ENCODE measurements at regions of chr13 and their contacts with region 1.

Region 1: DNA sequence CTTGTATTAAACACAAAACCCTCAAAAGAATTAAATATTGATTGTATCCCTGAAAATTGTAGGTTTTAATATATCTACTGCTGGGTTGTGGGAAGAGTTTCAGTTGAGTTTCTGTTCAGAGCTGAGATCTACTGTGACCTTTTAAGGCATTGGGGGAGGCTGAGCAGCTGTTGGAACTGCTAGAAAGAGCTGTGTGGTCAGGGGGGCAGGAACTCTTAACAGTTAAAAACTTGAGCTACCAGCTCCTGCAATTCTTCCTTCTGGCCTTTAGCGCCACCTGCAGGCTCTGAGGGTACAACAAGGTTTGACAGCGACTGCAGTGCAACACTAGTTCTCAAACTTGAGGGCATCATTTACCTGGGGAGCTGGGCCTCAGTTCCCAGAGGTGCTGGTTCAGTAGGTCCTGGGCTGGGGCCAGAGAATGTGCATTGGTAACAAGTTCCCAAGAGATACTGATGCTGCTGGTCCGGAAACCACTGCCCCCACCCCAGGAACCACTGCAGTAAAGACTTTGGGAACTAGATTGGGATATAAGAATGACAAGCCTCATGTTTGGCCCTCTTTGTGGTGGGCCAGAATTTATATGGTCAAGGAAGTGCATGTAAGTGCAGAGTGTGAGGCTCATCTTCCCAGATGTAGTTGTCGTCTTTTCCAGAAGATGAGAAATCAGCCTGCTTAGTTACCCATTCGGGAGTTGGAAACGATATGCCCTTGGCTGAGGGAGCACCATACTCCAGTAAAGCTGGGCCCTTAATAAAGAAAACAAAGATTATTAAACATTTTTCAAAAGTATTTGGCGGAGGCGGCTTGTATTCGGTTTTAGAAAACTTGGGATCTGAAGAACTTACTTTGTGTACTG is 2.6 kb downstream of the RNASEH2B start:
- DNase-seq: peak; percentile 92
- ATAC-seq: peak; percentile 56
- H3K4me3 ChIP-seq: peak overlapping the region; percentile 71 to 94 (median 87)
- H3K4me3 Mint-ChIP-seq: peak overlapping the region; percentile 95
- H3K27ac ChIP-seq: peak overlapping the region; percentile 95 to 98
- H3K27ac Mint-ChIP-seq: peak overlapping the region; percentile 97
- H3K4me1 ChIP-seq: peaks cover 56 to 59% of the 10 kb centered on the region in 2 donors
- H3K4me1 Mint-ChIP-seq: peaks cover 70% of the 10 kb centered on the region
- H3K27me3 ChIP-seq: no peaks in the 10 kb centered on the region
- H3K27me3 Mint-ChIP-seq: no peaks in the 10 kb centered on the region
- CTCF ChIP-seq: peak; percentile 89

Region 2: GRCh38 chr13:49840266-49840665 is 1071.9 kb before region 1 on chr13:
- CTCF ChIA-PET with region 1: no interaction called
- POLR2A ChIA-PET with region 1: no interaction called
- intact Hi-C with region 1: loop called (anchors 5 kb)
- DNase-seq: no peak
- ATAC-seq: no peak
- H3K4me3 ChIP-seq: no peak overlapping the region
- H3K4me3 Mint-ChIP-seq: no peak overlapping the region
- H3K27ac ChIP-seq: no peak overlapping the region
- H3K27ac Mint-ChIP-seq: no peak overlapping the region
- H3K4me1 ChIP-seq: no peaks in the 10 kb centered on the region
- H3K4me1 Mint-ChIP-seq: no peaks in the 10 kb centered on the region
- H3K27me3 ChIP-seq: no peaks in the 10 kb centered on the region
- H3K27me3 Mint-ChIP-seq: no peaks in the 10 kb centered on the region
- CTCF ChIP-seq: no peak

Region 3: DNA sequence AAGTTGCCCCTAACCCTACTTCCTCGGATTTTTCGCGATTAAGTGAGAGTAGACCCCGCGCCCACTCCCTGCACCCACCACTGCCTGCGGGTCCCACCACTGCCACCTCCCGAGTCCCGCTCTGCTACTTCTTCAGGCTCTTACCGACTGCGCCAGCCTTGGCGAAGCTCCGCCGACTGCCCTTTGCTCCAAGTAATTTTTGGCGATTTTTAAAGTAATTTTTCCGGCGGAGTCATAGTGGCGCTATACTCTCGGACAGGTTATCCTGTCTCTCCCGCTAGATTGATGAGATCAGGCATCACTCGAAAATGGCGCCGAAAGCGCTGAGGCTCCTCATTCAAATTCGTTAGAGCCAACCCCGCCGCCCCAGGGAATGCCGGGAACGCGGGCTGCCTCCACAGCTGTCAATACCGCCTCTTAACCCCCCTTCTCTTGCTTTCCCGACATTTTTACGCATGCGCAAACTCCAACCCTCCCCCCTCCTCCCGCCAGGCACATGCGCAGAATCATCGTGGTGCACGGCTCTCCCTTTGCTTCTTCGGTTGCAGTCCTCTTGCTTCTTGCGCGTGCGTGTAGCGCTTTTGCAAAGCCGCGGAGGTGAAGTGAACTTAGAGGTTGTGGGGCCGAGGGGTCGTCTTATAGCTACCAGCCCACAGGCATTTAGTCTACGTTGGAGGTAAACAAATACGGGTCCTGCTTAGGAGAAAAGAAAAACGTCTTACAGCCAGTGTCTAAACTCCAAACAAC is 830.3 kb before region 1 on chr13:
- CTCF ChIA-PET with region 1: interaction called, 32 read pairs
- POLR2A ChIA-PET with region 1: interaction called, 8 read pairs
- intact Hi-C with region 1: loop called (anchors 1 kb)
- DNase-seq: peak; percentile 99
- ATAC-seq: peak; percentile 77
- H3K4me3 ChIP-seq: peak overlapping the region; percentile 81 to 99 (median 91)
- H3K4me3 Mint-ChIP-seq: peak overlapping the region; percentile 94
- H3K27ac ChIP-seq: peak overlapping the region; percentile 82 to 85
- H3K27ac Mint-ChIP-seq: peak overlapping the region; percentile 94
- H3K4me1 ChIP-seq: peaks cover 29 to 48% of the 10 kb centered on the region in 2 donors
- H3K4me1 Mint-ChIP-seq: peaks cover 57% of the 10 kb centered on the region
- H3K27me3 ChIP-seq: no peaks in the 10 kb centered on the region
- H3K27me3 Mint-ChIP-seq: no peaks in the 10 kb centered on the region
- CTCF ChIP-seq: no peak

Region 4: DNA sequence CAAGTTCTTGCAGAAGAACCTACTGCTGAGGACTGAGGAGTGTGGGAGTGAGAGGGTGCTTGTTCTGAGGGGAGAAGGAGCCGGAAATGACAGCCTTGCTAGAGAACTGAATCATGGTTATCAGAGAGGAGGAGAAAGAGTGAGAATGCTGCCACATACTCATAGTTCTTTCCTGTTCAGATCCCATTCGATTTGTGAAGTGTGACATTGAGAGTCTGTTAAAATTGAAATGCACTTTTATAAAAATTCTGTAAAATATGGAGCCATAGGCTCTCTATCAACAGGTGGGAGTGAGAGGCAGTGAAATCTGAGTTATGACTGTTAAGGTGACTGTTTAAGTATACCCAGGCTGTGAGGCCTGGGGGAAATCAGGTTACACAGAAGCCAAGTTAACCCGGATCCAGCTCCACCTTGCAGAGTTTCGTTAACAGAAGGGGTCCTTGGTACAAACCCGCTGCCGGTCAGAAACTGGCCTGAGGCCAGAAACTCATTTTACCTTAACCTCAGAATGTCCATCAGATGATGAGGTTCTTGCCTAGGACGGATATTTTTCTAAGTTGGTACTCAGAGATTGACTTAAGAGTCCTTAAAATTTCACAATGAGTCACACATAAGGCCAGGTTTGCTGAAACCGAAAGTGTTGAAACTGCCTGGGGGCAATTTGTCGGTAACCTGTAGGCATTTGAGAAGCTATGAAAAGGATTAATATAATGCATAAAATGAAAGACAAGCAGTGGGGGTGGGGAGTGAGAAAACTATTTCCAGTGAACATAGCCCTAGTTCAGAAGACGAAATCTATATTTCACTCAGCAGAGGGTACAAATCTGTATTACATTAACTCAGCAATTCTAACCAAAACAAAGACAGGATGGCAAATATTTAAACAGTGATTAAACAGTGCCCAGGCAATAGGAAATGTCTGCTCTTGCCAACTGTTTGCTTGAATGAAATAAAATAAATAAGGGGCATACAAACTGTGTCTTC is 546.5 kb before region 1 on chr13:
- CTCF ChIA-PET with region 1: interaction called, 5 read pairs
- POLR2A ChIA-PET with region 1: interaction called, 3 read pairs
- intact Hi-C with region 1: loop called (anchors 5 kb)
- DNase-seq: peak; percentile 47
- ATAC-seq: peak; percentile 43
- H3K4me3 ChIP-seq: peak overlapping the region in 3 of 5 experiments; percentile 6 to 35 (median 17)
- H3K4me3 Mint-ChIP-seq: peak overlapping the region; percentile 76
- H3K27ac ChIP-seq: peak overlapping the region in 1 of 2 donors; percentile 6
- H3K27ac Mint-ChIP-seq: peak overlapping the region; percentile 76
- H3K4me1 ChIP-seq: peaks cover 16 to 37% of the 10 kb centered on the region in 2 donors
- H3K4me1 Mint-ChIP-seq: peaks cover 45% of the 10 kb centered on the region
- H3K27me3 ChIP-seq: no peaks in the 10 kb centered on the region
- H3K27me3 Mint-ChIP-seq: no peaks in the 10 kb centered on the region
- CTCF ChIP-seq: no peak

Region 5: DNA sequence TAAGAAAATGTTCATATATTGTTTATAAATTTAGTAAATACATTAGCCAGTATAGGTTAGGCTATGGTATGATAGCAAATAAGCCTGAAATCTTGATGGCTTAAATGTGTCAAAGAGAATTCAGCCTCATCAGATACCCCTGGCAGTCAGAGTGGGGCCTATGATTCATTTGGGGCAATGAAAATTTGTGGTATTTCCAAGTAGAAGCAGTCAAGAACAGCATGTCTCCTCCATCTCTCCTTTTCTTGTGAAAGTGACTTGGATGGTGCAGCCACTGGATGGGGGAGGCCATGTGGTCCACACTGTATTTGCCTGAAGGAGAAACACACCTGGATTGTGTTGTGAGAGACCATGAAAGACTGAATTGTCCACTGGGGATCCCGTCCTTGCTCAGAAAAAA is 151.4 kb before region 1 on chr13:
- CTCF ChIA-PET with region 1: interaction called, 8 read pairs
- POLR2A ChIA-PET with region 1: no interaction called
- intact Hi-C with region 1: loop called (anchors 5 kb)
- DNase-seq: no peak
- ATAC-seq: no peak
- H3K4me3 ChIP-seq: no peak overlapping the region
- H3K4me3 Mint-ChIP-seq: no peak overlapping the region
- H3K27ac ChIP-seq: no peak overlapping the region
- H3K27ac Mint-ChIP-seq: no peak overlapping the region
- H3K4me1 ChIP-seq: peaks cover 48% of the 10 kb centered on the region in 2 donors
- H3K4me1 Mint-ChIP-seq: peaks cover 57% of the 10 kb centered on the region
- H3K27me3 ChIP-seq: no peaks in the 10 kb centered on the region
- H3K27me3 Mint-ChIP-seq: no peaks in the 10 kb centered on the region
- CTCF ChIP-seq: no peak

Region 6: GRCh38 chr13:50901701-50902100 is 10.5 kb before region 1 on chr13:
- CTCF ChIA-PET with region 1: interaction called, 12 read pairs
- POLR2A ChIA-PET with region 1: interaction called, 3 read pairs
- intact Hi-C with region 1: no loop called
- DNase-seq: no peak
- ATAC-seq: no peak
- H3K4me3 ChIP-seq: no peak overlapping the region
- H3K4me3 Mint-ChIP-seq: no peak overlapping the region
- H3K27ac ChIP-seq: no peak overlapping the region
- H3K27ac Mint-ChIP-seq: no peak overlapping the region
- H3K4me1 ChIP-seq: peaks cover 7 to 8% of the 10 kb centered on the region in 2 donors
- H3K4me1 Mint-ChIP-seq: peaks cover 6% of the 10 kb centered on the region
- H3K27me3 ChIP-seq: no peaks in the 10 kb centered on the region
- H3K27me3 Mint-ChIP-seq: no peaks in the 10 kb centered on the region
- CTCF ChIP-seq: no peak

Region 7: GRCh38 chr13:50955216-50955615 is 43.0 kb after region 1 on chr13:
- CTCF ChIA-PET with region 1: no interaction called
- POLR2A ChIA-PET with region 1: no interaction called
- intact Hi-C with region 1: no loop called
- DNase-seq: no peak
- ATAC-seq: no peak
- H3K4me3 ChIP-seq: no peak overlapping the region
- H3K4me3 Mint-ChIP-seq: no peak overlapping the region
- H3K27ac ChIP-seq: no peak overlapping the region
- H3K27ac Mint-ChIP-seq: no peak overlapping the region
- H3K4me1 ChIP-seq: peaks cover 0 to 6% of the 10 kb centered on the region in 2 donors
- H3K4me1 Mint-ChIP-seq: peaks cover 12% of the 10 kb centered on the region
- H3K27me3 ChIP-seq: no peaks in the 10 kb centered on the region
- H3K27me3 Mint-ChIP-seq: no peaks in the 10 kb centered on the region
- CTCF ChIP-seq: no peak

Region 8: GRCh38 chr13:51348069-51348967 is 436.2 kb after region 1 on chr13:
- CTCF ChIA-PET with region 1: no interaction called
- POLR2A ChIA-PET with region 1: no interaction called
- intact Hi-C with region 1: no loop called
- DNase-seq: no peak
- ATAC-seq: no peak
- H3K4me3 ChIP-seq: no peak overlapping the region
- H3K4me3 Mint-ChIP-seq: no peak overlapping the region
- H3K27ac ChIP-seq: no peak overlapping the region
- H3K27ac Mint-ChIP-seq: no peak overlapping the region
- H3K4me1 ChIP-seq: no peaks in the 10 kb centered on the region
- H3K4me1 Mint-ChIP-seq: no peaks in the 10 kb centered on the region
- H3K27me3 ChIP-seq: no peaks in the 10 kb centered on the region
- H3K27me3 Mint-ChIP-seq: no peaks in the 10 kb centered on the region
- CTCF ChIP-seq: no peak

Region 9: GRCh38 chr13:52159321-52160086 is 1247.3 kb after region 1 on chr13 and contains the start of gene NEK3:
- CTCF ChIA-PET with region 1: no interaction called
- POLR2A ChIA-PET with region 1: no interaction called
- intact Hi-C with region 1: no loop called
- DNase-seq: peak; percentile 67
- ATAC-seq: peak; percentile 80
- H3K4me3 ChIP-seq: peak within 1 kb of the TSS; percentile 52 to 74 (median 72)
- H3K4me3 Mint-ChIP-seq: peak within 1 kb of the TSS; percentile 91
- H3K27ac ChIP-seq: peak within 1 kb of the TSS; percentile 13 to 50
- H3K27ac Mint-ChIP-seq: peak within 1 kb of the TSS; percentile 76
- H3K4me1 ChIP-seq: peaks cover 13% of the 10 kb centered on the region in 2 donors
- H3K4me1 Mint-ChIP-seq: peaks cover 20% of the 10 kb centered on the region
- H3K27me3 ChIP-seq: no peaks in the 10 kb centered on the region
- H3K27me3 Mint-ChIP-seq: no peaks in the 10 kb centered on the region
- CTCF ChIP-seq: no peak
- total RNA-seq, gene NEK3: 11.5 and 12.6 TPM in 2 replicates